Aorta (tissue), 5 donors: ENCODE measurements at regions of chr11 and their contacts with region 1.

Region 1: DNA sequence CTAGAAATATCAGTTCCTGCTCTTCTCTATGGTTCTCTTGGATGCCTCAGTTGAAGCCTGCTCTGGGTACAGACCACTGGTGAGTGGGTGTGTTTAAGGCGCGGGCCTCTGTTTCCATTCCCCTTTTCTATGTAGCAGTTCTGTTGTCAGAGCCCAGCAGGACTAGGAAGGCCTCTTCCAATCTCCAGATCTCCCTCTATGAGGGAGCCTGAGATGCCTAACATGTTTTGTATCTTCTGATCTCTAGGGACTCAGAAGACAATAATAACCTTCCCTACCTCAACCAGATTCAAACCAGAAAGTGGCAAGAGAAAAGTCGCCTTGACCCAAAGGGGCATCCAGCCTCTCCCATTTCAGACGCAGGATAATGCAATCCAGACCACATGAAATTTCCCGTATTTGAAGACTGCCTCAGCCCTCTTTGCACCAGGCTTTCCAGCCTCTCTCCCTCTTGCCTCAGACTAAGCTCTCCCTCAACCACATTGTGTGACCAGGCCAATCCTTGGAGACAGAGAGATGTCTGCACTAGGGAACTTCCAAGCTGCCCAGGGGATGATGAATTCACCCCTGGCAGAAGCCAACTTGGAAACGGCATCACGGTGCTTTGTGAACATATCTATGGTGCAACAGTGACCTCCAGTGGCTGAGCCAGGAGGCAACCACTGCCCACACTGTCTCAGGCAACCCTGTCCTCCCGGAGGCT is 150.1 kb upstream of the UBASH3B start:
- DNase-seq: peak; percentile 88 to 90
- ATAC-seq: peak; percentile 95
- H3K4me3 ChIP-seq: no peak overlapping the region
- H3K27ac ChIP-seq: no peak overlapping the region
- H3K4me1 ChIP-seq: no peaks in the 10 kb centered on the region
- H3K27me3 ChIP-seq: no peaks in the 10 kb centered on the region

Region 2: DNA sequence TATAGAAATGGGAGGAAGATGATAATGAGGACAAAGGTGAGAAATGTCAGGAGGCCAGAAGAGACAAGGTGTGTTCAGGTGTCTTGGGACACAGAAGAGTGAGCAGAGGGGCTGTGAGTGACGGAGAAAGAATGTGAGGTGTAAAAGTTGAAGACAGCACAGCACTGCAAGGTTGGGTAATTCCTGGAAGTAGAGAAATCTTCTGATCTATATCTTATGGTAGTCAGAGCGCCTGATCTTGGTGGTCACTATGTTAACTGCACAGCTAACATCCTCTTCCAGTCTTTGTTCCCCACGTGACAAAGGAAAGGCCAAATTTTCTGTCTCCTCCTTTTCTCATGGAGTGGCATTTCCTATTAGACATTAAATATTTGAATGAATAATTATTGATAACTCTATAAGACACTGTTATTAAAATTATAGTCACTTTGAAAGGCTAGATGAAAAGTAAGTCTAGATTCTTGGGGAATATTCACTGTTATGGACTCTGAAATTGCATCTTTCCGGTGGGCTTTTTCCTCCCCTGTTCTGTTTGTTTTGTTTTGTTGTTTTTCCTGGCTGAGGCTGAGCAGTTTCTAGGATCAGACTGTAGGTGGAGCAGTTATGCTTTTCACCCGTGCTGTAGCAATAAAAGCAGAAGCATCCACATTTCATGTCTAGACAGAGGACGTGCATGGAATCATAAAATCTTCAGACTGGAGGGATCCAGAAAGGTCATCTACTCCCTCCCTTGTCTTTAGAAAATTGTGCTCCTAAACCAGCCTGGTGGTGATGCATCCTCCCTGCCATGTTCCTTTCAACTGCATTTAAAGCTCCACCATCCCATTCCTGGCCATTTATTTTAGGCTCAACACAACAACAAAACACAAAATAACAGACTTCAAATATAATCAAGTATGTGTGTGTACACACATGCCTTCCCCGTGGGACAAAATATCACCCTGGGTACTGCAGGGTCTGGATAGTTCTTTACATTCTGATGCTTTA is 1186.3 kb before region 1 on chr11:
- intact Hi-C with region 1: loop called in 1 of 2 experiments (anchors 10 kb)
- DNase-seq: no peak
- ATAC-seq: no peak
- H3K4me3 ChIP-seq: no peak overlapping the region
- H3K27ac ChIP-seq: no peak overlapping the region
- H3K4me1 ChIP-seq: no peaks in the 10 kb centered on the region
- H3K27me3 ChIP-seq: no peaks in the 10 kb centered on the region

Region 3: GRCh38 chr11:121655537-121656327 is 849.7 kb before region 1 on chr11:
- intact Hi-C with region 1: loop called (anchors 2 kb)
- DNase-seq: peak; percentile 93 to 96
- ATAC-seq: peak; percentile 98
- H3K4me3 ChIP-seq: peak overlapping the region; percentile 19 to 57
- H3K27ac ChIP-seq: peak overlapping the region; percentile 74 to 99
- H3K4me1 ChIP-seq: no peaks in the 10 kb centered on the region
- H3K27me3 ChIP-seq: no peaks in the 10 kb centered on the region

Region 4: DNA sequence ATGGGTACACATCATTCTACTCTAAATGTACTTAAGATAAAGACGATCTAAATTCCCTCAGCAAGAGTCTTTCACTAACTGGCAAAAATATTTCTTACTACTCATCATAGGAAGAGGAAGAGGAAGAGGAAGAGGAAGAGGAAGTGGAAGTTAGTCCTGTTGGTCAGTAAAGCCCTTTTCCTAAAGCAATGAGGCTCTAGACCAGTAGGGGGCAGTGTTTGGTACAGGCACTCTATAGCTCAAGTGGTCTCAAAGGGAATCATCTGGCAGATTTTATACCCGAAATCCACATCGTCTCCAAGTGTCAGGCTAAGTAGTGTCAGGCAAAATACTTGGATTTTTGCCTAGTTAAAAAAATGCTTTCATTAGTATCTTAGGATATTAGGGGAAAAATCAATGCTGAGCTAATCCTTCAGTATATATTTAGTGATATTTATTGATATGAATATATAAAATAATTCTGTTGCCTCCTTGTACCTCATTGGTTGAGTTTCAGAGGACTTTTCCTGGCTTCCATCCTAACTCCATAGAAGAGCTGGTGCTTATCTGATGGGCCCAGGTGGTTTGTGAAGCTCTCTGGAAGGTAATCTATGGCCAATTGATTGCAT is 397.2 kb before region 1 on chr11:
- intact Hi-C with region 1: loop called (anchors 5 to 10 kb)
- DNase-seq: no peak
- ATAC-seq: no peak
- H3K4me3 ChIP-seq: no peak overlapping the region
- H3K27ac ChIP-seq: peak overlapping the region in 1 of 2 donors; percentile 44
- H3K4me1 ChIP-seq: peaks cover 5 to 17% of the 10 kb centered on the region in 2 donors
- H3K27me3 ChIP-seq: no peaks in the 10 kb centered on the region

Region 5: GRCh38 chr11:122215244-122215992 is 290.0 kb before region 1 on chr11:
- intact Hi-C with region 1: loop called (anchors 2 to 5 kb)
- DNase-seq: peak; percentile 89 to 92
- ATAC-seq: peak; percentile 90
- H3K4me3 ChIP-seq: no peak overlapping the region
- H3K27ac ChIP-seq: peak overlapping the region; percentile 72 to 83
- H3K4me1 ChIP-seq: peaks cover 6 to 10% of the 10 kb centered on the region in 2 donors
- H3K27me3 ChIP-seq: no peaks in the 10 kb centered on the region

Region 6: GRCh38 chr11:122617297-122617696 is 111.8 kb after region 1 on chr11:
- intact Hi-C with region 1: no loop called
- DNase-seq: no peak
- ATAC-seq: no peak
- H3K4me3 ChIP-seq: no peak overlapping the region
- H3K27ac ChIP-seq: no peak overlapping the region
- H3K4me1 ChIP-seq: no peaks in the 10 kb centered on the region
- H3K27me3 ChIP-seq: no peaks in the 10 kb centered on the region

Region 7: DNA sequence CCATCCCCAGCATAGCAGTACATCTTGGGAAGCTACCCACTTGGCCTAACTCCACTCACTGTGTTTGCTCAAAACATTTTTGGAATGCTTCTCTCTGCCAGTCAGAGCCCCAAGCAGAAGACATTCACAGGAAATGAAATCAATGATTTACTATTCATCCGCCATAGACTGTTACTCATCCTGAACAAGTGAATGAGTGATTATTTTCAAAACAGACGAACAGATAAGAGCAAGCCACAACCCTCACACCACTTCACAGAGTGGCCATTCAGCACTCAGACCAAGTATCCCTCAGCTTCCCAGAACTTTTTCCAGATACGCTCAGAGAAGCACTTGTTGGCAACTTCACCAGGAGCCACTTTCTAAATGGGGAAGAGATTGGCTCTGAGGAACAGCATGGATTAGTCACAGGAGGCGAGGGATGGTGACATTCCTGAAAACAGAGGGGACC is 137.0 kb after region 1 on chr11:
- intact Hi-C with region 1: no loop called
- DNase-seq: peak in 1 of 2 donors; percentile 14
- ATAC-seq: peak; percentile 26
- H3K4me3 ChIP-seq: no peak overlapping the region
- H3K27ac ChIP-seq: no peak overlapping the region
- H3K4me1 ChIP-seq: no peaks in the 10 kb centered on the region
- H3K27me3 ChIP-seq: no peaks in the 10 kb centered on the region